PC-3 (cell line): ENCODE measurements at regions of chr1 and their contacts with region 1.

Region 1: DNA sequence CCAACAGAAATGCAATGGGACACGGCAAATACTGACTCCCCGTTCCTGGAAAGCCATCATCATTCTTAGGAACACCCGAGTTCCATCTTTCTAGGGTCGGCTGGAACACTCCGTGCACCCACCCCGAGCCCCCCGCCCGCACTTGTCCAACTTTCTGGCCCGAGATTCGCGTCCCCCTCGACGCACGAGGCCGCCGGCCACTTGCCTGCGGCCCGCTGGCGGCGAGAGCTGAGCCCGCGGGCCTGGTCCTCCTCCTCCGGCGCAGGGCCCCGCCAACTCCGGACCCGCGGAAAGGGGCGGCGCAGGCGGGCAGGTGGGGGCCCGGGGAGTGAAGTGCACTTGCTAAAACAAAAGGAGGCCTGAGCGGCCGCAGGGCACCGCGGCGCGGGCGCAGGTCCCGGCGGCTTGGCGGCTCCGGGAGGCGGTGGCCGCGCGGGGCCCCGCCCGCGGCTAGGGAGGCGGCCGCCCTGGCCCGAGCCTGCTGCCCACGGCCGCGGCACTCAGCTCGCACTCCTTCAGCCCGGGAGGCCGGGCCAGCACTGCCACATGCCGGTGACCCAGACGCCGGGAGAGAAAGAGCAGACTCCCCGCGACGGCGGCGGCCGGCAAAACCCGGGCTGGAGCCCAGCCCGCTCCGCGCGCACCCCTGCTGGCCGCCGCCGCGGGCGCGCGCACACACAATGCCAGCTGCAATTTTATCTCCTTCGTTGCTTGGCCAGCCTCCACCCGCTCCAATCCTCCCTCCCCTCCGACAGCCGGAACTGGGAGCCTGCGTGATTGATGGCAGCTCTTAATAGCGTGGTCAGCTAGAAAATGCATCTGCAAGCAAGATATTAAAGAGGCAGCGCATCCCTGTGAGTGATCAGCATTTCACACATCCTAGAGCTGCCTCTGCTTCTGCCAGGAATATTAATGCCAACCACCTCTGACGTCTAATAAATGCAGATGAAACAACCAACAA is 114.3 kb downstream of the RERE start:
- DNase-seq: peak; percentile 93
- ATAC-seq: peak; percentile 89
- H3K4me3 ChIP-seq: peak overlapping the region; percentile 69
- H3K27ac ChIP-seq: peak overlapping the region; percentile 94
- H3K4me1 ChIP-seq: peaks cover 42% of the 10 kb centered on the region
- H3K27me3 ChIP-seq: no peaks in the 10 kb centered on the region
- CTCF ChIP-seq: no peak

Region 2: DNA sequence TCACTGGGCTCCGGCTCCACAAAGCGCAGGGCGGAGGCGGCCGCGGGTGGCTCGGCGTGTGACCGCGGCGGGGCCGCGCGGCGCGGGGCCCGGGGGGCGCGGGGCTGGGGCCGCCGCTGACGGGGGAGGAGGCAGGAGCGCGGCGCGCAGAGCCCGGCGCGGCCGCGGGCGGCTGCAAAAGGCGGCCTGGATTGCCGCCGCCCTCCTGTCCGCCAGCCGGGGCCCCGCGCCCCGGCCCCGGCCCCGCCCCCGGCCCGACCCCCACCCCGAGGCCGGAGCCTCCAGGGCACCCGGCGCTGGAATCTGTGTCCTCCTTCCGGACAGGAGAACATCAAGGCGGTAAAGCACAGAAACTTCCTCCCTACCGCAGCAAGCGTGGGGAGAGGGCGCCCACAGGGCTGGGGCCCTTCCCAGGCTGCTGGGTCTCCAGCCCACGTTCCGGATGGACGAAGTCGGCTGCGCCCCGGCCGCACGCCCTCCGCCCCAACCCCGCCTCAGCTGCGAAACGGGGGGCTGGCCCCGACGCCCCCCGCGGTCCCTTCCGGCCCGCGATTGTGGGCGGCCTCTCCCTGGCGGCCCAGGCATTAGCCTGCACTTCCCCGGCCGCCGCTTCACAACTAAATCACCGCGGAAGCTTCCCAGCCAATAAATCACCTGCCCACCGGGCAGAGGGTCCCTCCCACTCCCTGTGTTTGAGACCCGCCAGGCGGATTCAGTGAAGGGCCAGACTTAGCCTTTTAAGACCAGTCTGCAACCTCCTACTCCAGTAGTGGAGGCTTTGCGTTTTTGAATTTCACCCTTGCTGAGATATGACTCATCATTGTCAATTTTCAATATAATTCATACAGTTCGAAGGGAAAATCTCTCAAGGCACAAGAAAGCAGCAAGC is 279.2 kb before region 1 on chr1:
- CTCF ChIA-PET with region 1: no interaction called
- POLR2A ChIA-PET with region 1: interaction called, 3 read pairs
- intact Hi-C with region 1: loop called (anchors 5 kb)
- DNase-seq: peak; percentile 61
- ATAC-seq: peak; percentile 53
- H3K4me3 ChIP-seq: peak overlapping the region; percentile 75
- H3K27ac ChIP-seq: peak overlapping the region; percentile 93
- H3K4me1 ChIP-seq: peaks cover 37% of the 10 kb centered on the region
- H3K27me3 ChIP-seq: no peaks in the 10 kb centered on the region
- CTCF ChIP-seq: no peak

Region 3: DNA sequence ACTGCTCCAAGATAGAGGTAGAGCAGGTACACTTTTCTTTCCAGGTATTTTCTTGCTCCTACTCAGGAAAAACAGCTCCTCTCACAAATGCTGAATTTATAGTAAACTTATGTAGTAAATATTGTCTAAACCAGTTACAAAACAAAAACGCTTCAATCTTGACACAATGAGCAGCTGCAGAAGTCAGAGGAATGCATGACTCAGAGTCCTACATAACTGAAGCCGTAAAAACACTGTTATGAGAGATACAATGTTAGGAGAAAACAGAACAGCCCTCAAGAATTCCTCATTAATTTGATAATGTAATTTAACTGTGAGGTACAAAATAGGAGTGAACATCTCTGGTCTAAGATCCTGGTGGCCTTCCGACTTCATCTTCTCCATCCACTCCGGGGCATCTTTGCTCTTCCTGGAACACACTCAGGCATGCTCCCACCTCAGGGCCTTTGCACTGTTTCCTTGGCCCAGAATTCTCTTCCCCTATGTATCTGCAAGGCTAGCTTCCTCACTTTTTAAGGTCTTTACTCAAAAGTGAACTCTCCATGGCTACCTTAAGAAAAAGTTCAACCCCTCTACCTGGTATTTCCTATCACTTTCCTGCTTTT is 246.7 kb before region 1 on chr1:
- CTCF ChIA-PET with region 1: no interaction called
- POLR2A ChIA-PET with region 1: no interaction called
- intact Hi-C with region 1: loop called (anchors 5 kb)
- DNase-seq: peak; percentile 55
- ATAC-seq: peak; percentile 95
- H3K4me3 ChIP-seq: no peak overlapping the region
- H3K27ac ChIP-seq: no peak overlapping the region
- H3K4me1 ChIP-seq: peaks cover 11% of the 10 kb centered on the region
- H3K27me3 ChIP-seq: no peaks in the 10 kb centered on the region
- CTCF ChIP-seq: no peak

Region 4: DNA sequence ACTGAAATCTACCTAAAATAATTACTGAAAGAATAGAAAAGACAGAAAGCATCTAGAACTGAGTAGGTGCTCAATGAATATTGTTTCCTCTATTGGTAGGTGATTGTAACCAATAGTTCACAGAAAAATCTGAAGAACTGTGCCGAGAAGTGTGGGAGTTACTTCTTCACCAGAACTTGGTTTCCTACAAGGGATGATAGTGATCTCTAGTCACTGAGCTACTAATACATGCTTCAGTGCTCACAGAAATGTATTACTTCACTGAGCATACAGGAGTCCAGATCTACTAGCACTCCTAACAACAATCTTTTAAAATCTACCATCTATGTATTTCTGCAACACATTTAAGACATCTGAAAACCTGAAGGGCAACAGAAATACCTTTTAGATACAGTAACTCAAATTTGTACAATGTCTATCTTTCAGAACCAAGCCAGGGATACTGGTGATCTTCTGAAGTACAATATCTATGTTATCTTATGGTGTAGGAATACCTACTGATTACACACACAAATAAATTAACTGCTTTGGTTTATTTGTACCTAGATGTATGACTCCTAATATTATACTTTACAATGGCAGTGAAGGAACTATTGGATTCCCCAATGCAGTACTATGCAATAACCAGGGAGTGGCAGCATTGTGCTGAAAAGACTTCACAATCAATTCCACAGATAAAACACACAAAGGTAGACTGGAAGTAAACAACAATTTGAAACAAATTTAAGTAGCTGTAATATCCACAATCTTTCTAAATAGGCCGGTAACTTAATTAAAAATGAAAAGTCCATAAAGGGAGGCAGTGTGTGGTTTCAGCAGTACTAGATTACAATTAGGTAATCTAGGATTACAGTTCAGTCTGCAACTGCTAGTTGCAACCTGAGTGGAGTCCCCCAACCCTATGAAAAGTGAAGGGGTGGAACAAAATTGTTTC is 142.3 kb before region 1 on chr1:
- CTCF ChIA-PET with region 1: interaction called, 4 read pairs
- POLR2A ChIA-PET with region 1: no interaction called
- intact Hi-C with region 1: loop called (anchors 1 kb)
- DNase-seq: peak; percentile 64
- ATAC-seq: peak; percentile 68
- H3K4me3 ChIP-seq: no peak overlapping the region
- H3K27ac ChIP-seq: no peak overlapping the region
- H3K4me1 ChIP-seq: peaks cover 14% of the 10 kb centered on the region
- H3K27me3 ChIP-seq: no peaks in the 10 kb centered on the region
- CTCF ChIP-seq: peak; percentile 94

Region 5: GRCh38 chr1:8660411-8660828 is 42.7 kb before region 1 on chr1:
- CTCF ChIA-PET with region 1: no interaction called
- POLR2A ChIA-PET with region 1: no interaction called
- intact Hi-C with region 1: loop called (anchors 5 kb)
- DNase-seq: peak; percentile 60
- ATAC-seq: peak; percentile 46
- H3K4me3 ChIP-seq: peak overlapping the region; percentile 32; the same call in 1 of the 2 replicates
- H3K27ac ChIP-seq: peak overlapping the region; percentile 97
- H3K4me1 ChIP-seq: peaks cover 49% of the 10 kb centered on the region
- H3K27me3 ChIP-seq: no peaks in the 10 kb centered on the region
- CTCF ChIP-seq: no peak

Region 6: GRCh38 chr1:8680664-8681650 is 22.2 kb before region 1 on chr1:
- CTCF ChIA-PET with region 1: interaction called, 6 read pairs
- POLR2A ChIA-PET with region 1: no interaction called
- intact Hi-C with region 1: loop called (anchors 1 kb)
- DNase-seq: peak; percentile 28
- ATAC-seq: peak; percentile 72
- H3K4me3 ChIP-seq: peak overlapping the region; percentile 70
- H3K27ac ChIP-seq: peak overlapping the region; percentile 4; the same call in 1 of the 2 replicates
- H3K4me1 ChIP-seq: peaks cover 35% of the 10 kb centered on the region
- H3K27me3 ChIP-seq: no peaks in the 10 kb centered on the region
- CTCF ChIP-seq: no peak

Region 7: GRCh38 chr1:8782001-8782620 is 79.0 kb after region 1 on chr1:
- CTCF ChIA-PET with region 1: no interaction called
- POLR2A ChIA-PET with region 1: no interaction called
- intact Hi-C with region 1: no loop called
- DNase-seq: no peak
- ATAC-seq: no peak
- H3K4me3 ChIP-seq: no peak overlapping the region
- H3K27ac ChIP-seq: no peak overlapping the region
- H3K4me1 ChIP-seq: peaks cover 17% of the 10 kb centered on the region
- H3K27me3 ChIP-seq: no peaks in the 10 kb centered on the region
- CTCF ChIP-seq: no peak

Region 8: GRCh38 chr1:8797216-8797615 is 94.1 kb after region 1 on chr1:
- CTCF ChIA-PET with region 1: no interaction called
- POLR2A ChIA-PET with region 1: no interaction called
- intact Hi-C with region 1: no loop called
- DNase-seq: peak; percentile 81
- ATAC-seq: peak; percentile 70
- H3K4me3 ChIP-seq: no peak overlapping the region
- H3K27ac ChIP-seq: peak overlapping the region; percentile 75
- H3K4me1 ChIP-seq: peaks cover 16% of the 10 kb centered on the region
- H3K27me3 ChIP-seq: no peaks in the 10 kb centered on the region
- CTCF ChIP-seq: no peak